AG04450 (cell line): ENCODE measurements at regions of chr2 and their contacts with region 1.

Region 1: GRCh38 chr2:63163161-63163820 is 112.7 kb downstream of the OTX1 start:
- DNase-seq: no peak
- H3K4me3 ChIP-seq: no peak overlapping the region
- H3K27ac ChIP-seq: no peak overlapping the region
- H3K27me3 ChIP-seq: no peaks in the 10 kb centered on the region
- CTCF ChIP-seq: no peak

Region 2: DNA sequence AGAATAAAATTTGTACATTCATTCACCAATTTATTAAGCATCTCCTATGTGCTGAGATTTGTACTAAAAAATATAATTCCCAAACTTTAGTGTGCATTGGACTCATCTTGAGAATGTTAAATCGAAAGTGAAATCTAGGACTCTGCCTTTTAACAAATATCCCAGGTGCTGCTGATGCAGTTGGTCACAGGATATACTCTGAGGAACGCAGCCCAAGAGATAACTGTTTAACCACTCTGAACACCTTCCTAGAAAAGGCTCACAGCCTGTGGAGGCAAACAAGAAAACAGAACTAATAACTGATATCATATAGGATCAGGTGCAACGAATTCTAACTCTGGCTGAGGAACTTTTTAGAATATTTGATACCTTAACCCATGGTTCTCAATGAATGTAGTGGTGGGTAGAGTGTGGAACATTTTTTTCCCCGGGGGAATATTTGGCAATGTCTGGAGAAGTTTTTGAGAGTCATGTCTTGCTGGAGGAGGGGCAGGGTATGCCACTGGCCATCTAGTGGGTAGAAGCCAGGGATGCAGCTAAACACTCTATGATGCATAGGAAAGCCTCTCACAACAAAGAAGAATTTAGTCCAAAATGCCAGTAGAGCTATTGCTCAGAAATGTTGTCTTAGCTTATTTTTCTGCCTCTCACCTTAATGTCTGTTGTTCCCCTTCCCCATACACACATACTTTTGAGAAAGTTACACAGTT is 361.3 kb before region 1 on chr2:
- CTCF ChIA-PET with region 1: no interaction called
- POLR2A ChIA-PET with region 1: no interaction called
- DNase-seq: no peak
- H3K4me3 ChIP-seq: no peak overlapping the region
- H3K27ac ChIP-seq: no peak overlapping the region
- H3K27me3 ChIP-seq: no peaks in the 10 kb centered on the region
- CTCF ChIP-seq: peak; percentile 26

Region 3: DNA sequence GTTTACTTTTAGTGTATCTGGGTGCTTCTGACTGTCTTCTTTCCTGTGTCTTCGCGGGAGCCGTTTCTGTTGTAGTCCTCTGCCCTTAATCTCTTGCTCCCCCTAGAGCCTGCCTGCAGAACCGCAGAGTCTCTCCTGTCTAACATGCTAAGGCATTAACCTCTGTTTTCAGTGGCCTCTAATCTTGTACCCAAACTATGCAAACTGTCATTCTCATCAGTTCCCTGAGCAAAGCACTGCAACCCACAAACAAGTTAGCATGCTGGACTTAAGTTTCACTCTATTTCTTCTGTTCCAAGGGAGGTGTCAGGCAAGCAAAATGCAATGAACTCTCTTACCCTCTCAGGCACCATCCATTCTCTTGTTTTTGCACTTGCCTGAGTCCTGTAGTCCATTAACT is 25.7 kb after region 1 on chr2:
- CTCF ChIA-PET with region 1: interaction called, 10 read pairs
- POLR2A ChIA-PET with region 1: no interaction called
- DNase-seq: peak; percentile 16
- H3K4me3 ChIP-seq: no peak overlapping the region
- H3K27ac ChIP-seq: no peak overlapping the region
- H3K27me3 ChIP-seq: no peaks in the 10 kb centered on the region
- CTCF ChIP-seq: peak; percentile 93